ENCODE measurements at regions of chr14 and their contacts with region 1.

Region 1: GRCh38 chr14:89618811-89619551 is 201.9 kb upstream of the FOXN3 start:
- DNase-seq: peak; percentile 35 to 93 (median 58)

Region 2: DNA sequence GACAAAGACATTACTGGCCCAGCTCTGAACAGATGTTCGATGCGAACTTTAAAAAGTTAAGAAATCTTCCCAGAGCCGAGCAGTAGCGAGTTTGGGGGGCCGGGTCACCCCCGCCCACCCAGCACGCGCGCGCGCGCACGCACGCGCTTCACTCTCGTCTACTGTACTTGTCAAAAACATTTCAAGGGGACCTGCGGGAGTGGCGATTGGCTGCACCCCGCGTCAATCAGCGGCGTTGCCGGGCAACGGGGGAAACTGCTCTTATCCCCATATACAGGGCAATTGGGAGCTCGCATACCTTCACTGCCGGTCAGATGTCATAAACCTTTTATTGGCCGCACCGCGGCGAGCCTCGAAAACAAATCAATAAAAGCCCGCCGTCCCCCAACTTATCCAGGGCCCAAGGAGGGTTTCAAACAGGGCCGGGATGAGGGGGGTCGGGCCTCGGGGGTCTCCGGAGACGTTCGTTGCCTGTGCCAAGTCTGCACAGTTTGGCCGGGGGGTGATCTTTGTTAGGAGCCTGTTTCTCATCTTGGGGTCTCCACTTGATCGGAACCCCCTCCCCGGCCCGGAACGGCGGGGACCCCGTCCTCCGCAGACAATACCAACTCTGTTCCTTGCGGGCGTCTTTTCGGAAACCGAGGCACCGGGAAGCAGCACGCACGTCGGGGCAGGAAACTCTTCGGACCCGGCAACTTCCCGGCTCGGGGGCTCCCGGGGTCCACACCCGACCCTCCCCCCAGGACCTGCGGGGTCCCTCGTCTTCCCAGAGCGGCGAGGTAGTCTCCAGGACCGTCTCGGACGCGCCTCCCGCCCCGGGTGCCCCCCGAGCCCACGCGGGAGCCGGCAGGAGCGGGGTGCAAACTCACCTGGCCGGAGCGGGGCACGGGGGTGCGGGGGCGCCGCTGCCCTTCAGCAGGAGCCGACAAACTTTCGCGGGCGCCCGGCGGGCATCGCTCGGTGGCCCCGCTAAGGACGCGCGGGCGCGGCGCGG is 202.7 kb before region 1 on chr14:
- intact Hi-C with region 1: loop called (anchors 2 kb)
- DNase-seq: peak; percentile 96 to 100 (median 98)

Region 3: DNA sequence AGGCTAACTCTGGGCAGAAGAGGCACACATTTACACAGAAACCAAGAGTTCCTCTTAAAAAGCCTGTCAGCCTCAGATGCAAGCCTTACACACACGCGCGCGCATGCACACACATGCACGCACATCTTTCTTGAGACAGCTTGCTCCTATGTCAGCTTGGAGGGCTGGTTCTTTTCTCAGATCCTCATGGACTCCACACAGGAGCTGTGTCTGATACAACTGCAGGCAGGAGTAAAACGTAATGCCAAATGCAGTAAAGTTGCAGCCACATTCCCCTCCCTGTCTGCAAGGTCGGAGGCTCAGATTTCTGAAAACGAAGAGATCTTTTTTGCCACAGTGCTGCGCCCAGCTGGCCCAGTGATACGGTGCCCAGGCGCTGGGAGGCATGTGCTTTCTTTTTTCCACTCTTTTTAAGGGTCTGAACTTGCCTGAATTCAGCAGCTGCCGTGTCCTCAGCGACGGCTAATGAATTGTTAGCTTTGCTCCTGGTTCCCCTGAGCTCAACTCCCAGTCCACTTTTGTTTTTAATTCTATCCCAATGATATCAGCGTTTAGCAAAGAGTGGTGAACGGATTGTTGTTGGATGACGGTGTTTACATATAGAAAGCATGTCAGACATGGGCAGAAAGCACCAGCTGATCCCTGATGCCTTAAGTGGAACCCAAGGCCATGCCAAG is 129.1 kb before region 1 on chr14:
- intact Hi-C with region 1: loop called (anchors 10 kb)
- DNase-seq: peak in 4 of 10 donors; percentile 33 to 77 (median 57)

Region 4: DNA sequence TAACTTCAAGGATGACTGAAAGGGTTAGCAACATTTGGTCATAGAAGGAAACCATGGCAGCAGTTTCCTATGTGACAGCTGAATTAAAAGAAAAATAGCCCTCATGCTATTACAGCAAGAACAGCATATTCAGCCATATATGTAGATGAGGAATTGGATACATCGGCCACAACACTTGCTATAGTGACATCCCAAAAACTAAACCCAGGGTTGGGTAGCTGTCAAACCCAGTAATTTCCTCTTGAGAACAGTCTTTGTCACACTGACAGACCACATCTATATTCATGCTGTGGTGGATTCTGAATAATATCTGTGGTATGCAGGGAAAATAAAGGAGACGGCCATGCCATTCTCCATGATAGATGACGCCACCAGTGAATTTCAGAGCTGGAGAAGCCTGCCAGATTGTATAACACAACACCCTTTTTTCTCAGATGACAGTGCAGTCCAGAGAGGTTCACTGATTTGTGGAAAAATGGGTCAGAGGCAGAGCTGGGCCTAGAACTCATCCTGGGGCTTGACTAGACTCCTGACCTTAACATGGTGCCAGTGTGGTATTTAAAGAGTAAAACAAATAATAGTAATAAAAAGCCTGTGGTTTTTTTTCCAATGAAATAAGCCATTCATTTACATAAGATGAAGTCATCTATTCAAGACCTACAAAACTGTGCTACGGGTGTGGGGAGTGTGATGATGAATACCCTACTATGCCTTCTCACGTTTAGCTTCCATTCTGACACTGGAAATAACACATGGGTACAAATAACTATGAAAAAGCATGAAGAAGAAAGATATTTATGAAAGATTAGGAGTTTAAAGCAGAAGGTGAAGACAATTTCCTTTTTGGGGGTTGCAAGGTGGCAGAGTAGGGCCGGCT is 303.3 kb after region 1 on chr14:
- intact Hi-C with region 1: loop called (anchors 10 kb)
- DNase-seq: no peak